ENCODE measurements at regions of chr16 and their contacts with region 1.

Region 1: DNA sequence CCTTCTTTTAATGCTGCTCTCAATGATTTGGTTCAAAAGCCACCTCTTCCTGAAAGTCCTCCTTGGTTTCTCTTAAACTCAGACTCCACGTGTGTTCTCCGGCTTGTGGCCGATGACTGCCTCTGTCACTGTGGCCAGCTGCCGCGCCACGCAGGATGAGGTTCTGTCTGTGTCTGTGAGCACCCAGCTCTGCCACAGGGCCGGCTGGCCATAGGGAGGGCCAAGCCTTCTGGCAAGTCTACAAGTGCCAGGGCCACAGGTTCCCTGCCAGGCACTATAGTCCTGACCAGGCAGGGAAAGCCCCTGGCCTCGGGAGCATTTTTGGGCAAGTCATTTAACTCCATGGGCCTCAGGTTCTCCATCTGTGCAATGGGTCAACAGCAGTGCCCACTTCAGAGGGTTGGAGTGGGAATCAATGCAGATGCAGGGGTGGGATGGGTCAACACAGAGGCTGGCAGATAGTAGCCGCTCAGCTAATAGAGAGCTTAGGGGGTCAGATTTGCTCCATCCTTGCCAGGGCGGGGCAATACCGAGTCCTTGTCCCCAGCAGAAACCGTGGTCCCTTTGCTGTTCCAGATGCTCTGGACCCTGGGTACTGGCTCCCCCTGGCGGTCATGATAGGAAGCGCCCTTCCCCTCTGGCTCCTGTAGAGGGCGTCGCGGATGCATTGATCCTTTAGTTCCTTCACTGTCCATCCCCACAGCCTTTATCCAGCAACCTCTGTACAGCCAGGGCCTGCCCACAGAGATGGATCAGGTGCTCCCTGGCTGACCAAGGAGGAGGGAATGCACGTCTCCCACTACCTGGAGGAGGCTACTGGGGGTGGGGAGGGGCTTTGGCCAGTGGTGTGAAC is 19.3 kb upstream of the ADGRG3 start:
- DNase-seq: peak; percentile 92
- ATAC-seq: peak; percentile 90
- H3K4me3 Mint-ChIP-seq: no peak overlapping the region
- H3K27ac Mint-ChIP-seq: peak overlapping the region; percentile 33
- H3K4me1 Mint-ChIP-seq: peaks cover 19% of the 10 kb centered on the region
- H3K27me3 Mint-ChIP-seq: no peaks in the 10 kb centered on the region

Region 2: GRCh38 chr16:56382901-56383355 is 1265.9 kb before region 1 on chr16:
- CTCF ChIA-PET with region 1: no interaction called
- POLR2A ChIA-PET with region 1: no interaction called
- intact Hi-C with region 1: no loop called
- DNase-seq: no peak
- ATAC-seq: no peak
- H3K4me3 Mint-ChIP-seq: no peak overlapping the region
- H3K27ac Mint-ChIP-seq: no peak overlapping the region
- H3K4me1 Mint-ChIP-seq: no peaks in the 10 kb centered on the region
- H3K27me3 Mint-ChIP-seq: no peaks in the 10 kb centered on the region

Region 3: DNA sequence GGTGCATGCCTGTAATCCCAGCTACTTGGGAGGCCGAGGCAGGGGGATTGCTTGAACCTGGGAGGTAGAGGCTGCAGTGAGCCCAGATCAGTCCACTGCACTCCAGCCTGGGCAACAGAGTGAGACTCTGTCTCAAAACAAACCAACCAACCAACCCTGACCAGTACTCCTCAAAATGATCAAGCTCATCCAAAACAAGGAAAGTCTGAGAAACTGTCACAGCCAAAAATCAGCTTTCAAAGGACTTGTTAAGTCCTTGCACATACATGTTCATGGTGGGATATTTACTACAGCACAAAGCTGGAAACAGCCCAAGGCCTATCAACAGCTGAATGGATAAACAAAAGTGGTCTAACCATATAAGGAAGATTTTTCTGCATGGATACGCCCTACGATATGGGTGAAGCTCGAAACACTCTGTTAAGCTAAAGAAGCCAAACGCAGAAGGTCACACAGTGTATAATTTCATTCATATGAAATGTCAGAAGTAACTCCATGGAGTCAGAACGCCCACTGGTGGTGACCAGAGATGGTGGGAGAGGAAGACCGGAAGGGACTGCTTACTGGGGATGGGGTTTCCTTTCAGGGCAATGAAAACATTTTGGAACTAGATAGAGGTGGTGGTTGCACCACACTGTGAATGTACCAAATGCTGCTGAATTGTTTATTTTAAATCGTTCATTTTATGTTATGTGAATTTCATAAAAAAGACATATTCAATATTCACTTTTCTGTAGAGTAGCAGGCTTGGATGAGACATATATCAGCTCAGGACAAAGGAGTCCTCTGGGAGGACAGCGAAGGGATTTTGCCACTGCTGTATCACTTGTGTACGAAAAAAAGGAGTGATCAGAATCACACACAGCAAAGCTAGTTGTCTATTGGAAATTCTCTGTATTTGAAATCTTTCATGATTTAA is 226.5 kb before region 1 on chr16:
- CTCF ChIA-PET with region 1: no interaction called
- POLR2A ChIA-PET with region 1: no interaction called
- intact Hi-C with region 1: no loop called
- DNase-seq: no peak
- ATAC-seq: no peak
- H3K4me3 Mint-ChIP-seq: no peak overlapping the region
- H3K27ac Mint-ChIP-seq: no peak overlapping the region
- H3K4me1 Mint-ChIP-seq: peaks cover 12% of the 10 kb centered on the region
- H3K27me3 Mint-ChIP-seq: no peaks in the 10 kb centered on the region

Region 4: GRCh38 chr16:57591086-57591869 is 57.5 kb before region 1 on chr16:
- CTCF ChIA-PET with region 1: interaction called, 57 read pairs
- POLR2A ChIA-PET with region 1: no interaction called
- intact Hi-C with region 1: loop called (anchors 1 kb)
- DNase-seq: peak; percentile 87
- ATAC-seq: peak; percentile 90
- H3K4me3 Mint-ChIP-seq: peak overlapping the region; percentile 60
- H3K27ac Mint-ChIP-seq: peak overlapping the region; percentile 92
- H3K4me1 Mint-ChIP-seq: peaks cover 32% of the 10 kb centered on the region
- H3K27me3 Mint-ChIP-seq: no peaks in the 10 kb centered on the region

Region 5: GRCh38 chr16:57600048-57600835 is 48.6 kb before region 1 on chr16:
- CTCF ChIA-PET with region 1: interaction called, 52 read pairs
- POLR2A ChIA-PET with region 1: no interaction called
- intact Hi-C with region 1: loop called (anchors 1 to 2 kb)
- DNase-seq: peak; percentile 73
- ATAC-seq: peak; percentile 18
- H3K4me3 Mint-ChIP-seq: no peak overlapping the region
- H3K27ac Mint-ChIP-seq: no peak overlapping the region
- H3K4me1 Mint-ChIP-seq: peaks cover 35% of the 10 kb centered on the region
- H3K27me3 Mint-ChIP-seq: no peaks in the 10 kb centered on the region

Region 6: DNA sequence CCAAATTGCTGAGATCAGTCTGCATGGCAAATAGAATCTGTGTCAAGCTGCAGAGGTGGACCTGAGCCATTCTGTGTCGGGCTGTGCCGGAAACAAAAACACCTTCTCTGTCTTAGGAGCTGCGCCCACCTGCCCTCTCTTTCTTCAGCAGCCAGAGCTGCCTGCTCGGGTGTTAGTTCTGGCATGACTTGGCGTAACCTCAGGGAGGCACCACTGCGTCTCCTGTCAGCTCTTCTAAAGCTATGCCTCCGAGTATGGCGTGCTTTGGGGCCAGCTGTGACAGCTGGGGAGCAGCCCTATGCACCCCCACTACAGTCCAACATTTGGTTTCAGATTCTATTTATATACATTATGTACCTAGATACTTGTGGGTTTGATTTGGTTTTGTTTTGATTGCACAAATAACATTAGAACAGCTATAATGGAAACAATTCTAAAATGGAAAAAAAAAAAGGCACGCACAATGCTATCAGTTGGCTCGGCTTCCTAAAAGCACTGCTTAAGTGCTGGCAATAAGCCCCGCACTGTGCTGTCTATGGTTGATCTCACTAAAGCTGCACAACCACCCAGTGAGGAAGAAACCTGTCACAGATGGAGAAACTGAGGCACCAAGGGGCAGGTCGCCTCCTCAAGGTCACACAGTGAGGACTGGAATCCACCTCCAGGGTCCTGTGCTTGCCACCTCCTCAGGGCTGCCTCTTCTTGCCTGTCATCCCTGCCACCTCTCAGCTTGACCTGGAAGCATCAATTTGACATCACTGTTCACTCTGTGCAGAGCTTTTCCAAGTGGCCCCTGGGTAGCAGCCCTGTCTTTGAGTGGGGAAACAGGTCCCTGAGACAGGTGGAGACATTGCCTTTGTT is 39.0 kb before region 1 on chr16:
- CTCF ChIA-PET with region 1: interaction called, 37 read pairs
- POLR2A ChIA-PET with region 1: interaction called, 3 read pairs
- intact Hi-C with region 1: loop called in 1 of 2 experiments (anchors 1 kb)
- DNase-seq: peak; percentile 93
- ATAC-seq: peak; percentile 94
- H3K4me3 Mint-ChIP-seq: peak overlapping the region; percentile 48
- H3K27ac Mint-ChIP-seq: peak overlapping the region; percentile 92
- H3K4me1 Mint-ChIP-seq: peaks cover 60% of the 10 kb centered on the region
- H3K27me3 Mint-ChIP-seq: no peaks in the 10 kb centered on the region

Region 7: DNA sequence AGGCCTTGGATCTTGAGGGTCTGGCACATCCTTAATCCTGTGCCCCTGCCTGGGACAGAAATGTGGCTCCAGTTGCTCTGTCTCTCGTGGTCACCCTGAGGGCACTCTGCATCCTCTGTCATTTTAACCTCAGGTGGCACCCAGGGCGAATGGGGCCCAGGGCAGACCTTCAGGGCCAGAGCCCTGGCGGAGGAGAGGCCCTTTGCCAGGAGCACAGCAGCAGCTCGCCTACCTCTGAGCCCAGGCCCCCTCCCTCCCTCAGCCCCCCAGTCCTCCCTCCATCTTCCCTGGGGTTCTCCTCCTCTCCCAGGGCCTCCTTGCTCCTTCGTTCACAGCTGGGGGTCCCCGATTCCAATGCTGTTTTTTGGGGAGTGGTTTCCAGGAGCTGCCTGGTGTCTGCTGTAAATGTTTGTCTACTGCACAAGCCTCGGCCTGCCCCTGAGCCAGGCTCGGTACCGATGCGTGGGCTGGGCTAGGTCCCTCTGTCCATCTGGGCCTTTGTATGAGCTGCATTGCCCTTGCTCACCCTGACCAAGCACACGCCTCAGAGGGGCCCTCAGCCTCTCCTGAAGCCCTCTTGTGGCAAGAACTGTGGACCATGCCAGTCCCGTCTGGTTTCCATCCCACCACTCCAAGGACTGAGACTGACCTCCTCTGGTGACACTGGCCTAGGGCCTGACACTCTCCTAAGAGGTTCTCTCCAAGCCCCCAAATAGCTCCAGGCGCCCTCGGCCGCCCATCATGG is 15.3 kb after region 1 on chr16:
- CTCF ChIA-PET with region 1: no interaction called
- POLR2A ChIA-PET with region 1: no interaction called
- intact Hi-C with region 1: loop called in 1 of 2 experiments (anchors 2 kb)
- DNase-seq: no peak
- ATAC-seq: no peak
- H3K4me3 Mint-ChIP-seq: no peak overlapping the region
- H3K27ac Mint-ChIP-seq: no peak overlapping the region
- H3K4me1 Mint-ChIP-seq: no peaks in the 10 kb centered on the region
- H3K27me3 Mint-ChIP-seq: no peaks in the 10 kb centered on the region

Region 8: DNA sequence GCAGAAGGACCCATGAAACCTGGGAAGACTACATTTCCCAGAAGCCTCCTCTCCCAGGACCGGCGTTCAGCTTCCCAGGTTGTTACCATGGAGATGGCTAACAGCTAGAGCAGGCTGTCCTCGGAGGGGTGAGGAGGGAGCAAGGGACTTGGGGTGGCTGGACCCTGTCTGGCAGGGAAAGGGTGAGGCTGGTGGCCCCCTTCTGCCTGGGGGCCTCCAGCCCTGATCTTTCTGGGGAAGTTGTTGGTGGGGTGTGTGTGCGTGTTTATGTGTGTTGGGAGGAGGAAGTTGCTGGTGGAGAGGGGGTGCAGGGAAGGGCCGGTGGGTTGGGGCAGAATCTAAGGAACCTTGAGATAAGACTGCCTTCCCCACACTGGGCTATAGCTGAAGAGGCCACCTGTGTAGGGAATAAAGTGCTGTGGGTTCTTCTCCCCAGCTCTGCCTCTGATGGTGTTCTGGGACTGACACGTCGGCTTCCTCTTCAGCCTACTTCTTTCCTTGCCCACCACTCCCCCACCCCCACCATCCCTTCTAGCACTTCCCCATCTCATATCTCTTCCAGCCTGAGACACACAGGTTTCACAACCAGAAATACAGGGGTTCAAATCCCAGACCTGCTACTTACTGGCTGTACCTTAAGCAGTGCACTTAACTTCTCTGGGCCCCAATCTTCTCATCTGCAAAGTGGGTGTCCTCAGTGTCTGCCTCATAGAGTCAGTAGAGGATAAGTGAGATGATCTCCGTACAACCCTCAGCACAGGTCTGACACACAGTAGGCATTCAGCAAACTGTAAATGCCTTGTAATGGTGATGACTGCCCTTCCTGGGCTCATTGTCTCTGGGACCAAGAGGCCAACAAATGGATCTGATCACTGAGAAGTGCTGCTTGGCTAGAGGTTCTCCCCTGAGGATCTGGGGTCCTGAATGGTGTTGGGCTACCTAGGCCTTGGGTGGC is 46.2 kb after region 1 on chr16 and contains the start of gene DRC7:
- CTCF ChIA-PET with region 1: no interaction called
- POLR2A ChIA-PET with region 1: no interaction called
- intact Hi-C with region 1: no loop called
- DNase-seq: peak; percentile 40
- ATAC-seq: peak; percentile 68
- H3K4me3 Mint-ChIP-seq: peak within 1 kb of the TSS; percentile 6
- H3K27ac Mint-ChIP-seq: peak within 1 kb of the TSS; percentile 24
- H3K4me1 Mint-ChIP-seq: peaks cover 8% of the 10 kb centered on the region
- H3K27me3 Mint-ChIP-seq: no peaks in the 10 kb centered on the region
- total RNA-seq, gene DRC7: 0.05 TPM in 1 of 2 experiments, not detected in the other

Region 9: DNA sequence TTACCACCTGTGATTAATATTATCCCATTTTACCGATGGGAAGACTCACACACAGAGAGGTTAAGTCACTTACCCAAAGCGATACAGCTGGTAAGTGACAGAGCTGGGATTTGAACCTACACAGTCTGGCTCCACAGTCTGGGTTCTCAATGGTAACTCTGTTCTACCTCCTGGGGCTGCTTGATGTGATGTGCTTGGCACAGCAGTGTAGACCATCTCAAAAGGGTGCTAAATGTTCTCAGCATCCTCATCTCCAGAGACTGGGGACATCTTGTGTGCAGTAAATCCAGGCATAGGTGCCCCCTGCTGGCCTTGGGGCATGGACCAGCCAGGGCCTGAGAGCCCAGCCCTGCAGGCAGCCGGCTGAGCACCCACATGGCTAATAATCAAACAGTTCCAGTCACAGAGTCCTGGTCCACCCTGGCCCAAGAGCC is 71.3 kb after region 1 on chr16:
- CTCF ChIA-PET with region 1: interaction called, 3 read pairs
- POLR2A ChIA-PET with region 1: no interaction called
- intact Hi-C with region 1: loop called (anchors 1 to 5 kb)
- DNase-seq: peak; percentile 74
- ATAC-seq: peak; percentile 80
- H3K4me3 Mint-ChIP-seq: no peak overlapping the region
- H3K27ac Mint-ChIP-seq: no peak overlapping the region
- H3K4me1 Mint-ChIP-seq: no peaks in the 10 kb centered on the region
- H3K27me3 Mint-ChIP-seq: no peaks in the 10 kb centered on the region

Region 10: DNA sequence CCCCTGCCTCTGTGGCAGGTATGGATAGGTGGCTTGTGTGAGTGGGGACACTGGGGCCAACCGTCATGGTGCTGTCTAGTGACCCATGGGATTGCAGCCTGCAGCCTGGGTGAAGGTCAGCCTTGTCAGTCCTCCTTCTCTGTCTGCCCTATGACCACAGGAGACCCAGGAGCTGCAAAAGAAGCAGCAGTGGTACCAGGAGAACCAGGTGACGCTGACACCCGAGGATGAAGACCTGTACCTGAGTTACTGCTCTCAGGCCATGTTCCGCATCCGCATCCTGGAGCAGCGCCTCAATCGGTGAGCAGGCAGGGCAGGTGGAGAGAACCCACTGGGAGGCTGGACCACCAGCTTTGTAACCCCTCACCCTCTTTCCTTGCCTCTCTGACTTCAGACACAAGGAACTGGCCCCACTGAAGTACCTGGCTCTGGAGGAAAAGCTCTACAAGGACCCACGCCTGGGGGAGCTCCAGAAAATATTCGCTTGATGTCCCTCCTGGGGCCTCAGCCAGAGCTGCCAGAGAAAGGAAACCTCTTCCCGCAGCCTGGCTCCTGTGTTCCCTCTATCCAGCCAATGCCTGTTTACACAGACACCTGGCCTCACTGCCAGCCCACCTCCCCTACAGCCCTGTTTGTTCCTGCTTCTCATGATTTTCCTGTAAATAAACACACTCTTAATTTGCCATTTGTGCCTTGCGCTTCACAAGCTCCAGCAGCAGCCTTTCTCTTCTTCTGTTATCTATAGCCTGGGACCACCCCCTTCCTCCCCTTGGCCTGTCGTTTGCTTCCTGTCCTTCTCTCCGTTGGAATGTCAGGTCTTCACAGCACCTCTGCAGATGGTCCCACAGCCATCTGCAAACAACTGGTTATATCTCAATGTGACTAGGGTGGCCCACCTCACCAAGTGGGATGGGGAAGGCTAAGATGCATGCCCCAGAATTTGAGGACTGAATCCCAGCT is 82.2 kb after region 1 on chr16:
- CTCF ChIA-PET with region 1: no interaction called
- POLR2A ChIA-PET with region 1: no interaction called
- intact Hi-C with region 1: no loop called
- DNase-seq: no peak
- ATAC-seq: no peak
- H3K4me3 Mint-ChIP-seq: no peak overlapping the region
- H3K27ac Mint-ChIP-seq: no peak overlapping the region
- H3K4me1 Mint-ChIP-seq: peaks cover 3% of the 10 kb centered on the region
- H3K27me3 Mint-ChIP-seq: no peaks in the 10 kb centered on the region